ENCODE measurements at regions of chr6 and their contacts with region 1.

Region 1: DNA sequence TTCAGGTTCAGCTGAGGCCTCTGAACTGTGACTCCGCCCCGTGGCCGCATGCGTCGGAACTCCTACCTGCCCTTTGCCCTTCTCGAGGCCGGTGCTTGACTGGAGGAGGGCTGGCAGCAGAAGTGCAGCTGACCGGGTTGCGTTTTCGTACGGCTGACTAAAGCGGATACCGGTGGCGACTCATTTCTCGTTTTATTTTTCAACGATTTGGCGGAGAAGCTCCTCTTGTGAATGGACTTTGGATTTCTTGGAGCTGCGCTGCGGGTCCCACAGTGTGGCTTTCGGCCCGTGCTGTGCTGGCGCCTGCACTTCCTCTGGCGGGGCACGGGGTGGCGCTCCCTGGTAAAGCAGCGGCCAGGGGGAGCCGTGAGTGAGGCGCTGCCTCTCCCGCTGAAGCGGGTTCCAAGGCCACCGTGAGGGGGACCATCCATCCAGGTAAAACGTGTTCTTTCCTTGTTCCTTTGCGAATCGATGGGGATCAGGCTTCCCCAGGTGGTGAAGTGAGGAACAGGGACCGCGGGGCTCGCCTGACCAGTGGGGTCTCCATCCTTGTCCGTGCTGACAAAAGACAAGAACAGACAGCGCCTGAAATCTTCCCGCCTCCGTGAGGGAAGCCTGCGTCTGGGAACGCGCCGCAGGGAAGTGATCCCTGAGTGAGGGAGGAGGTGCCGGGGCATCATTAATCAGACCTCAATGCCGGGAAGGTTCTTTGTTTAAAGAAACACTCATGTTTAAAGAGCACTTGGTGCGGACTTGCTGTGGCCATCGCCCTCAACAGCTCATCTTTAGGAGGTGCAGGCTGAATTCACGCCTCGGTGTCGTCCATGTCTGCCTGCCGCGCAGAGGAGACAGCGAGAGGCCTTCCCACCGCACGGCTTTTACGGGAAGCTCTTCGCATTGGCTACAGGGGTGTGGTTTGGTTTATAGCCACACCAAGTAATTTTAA is 38.8 kb downstream of the ERMARD start:
- DNase-seq: peak; percentile 81
- ATAC-seq: peak; percentile 93
- H3K4me3 ChIP-seq: peak overlapping the region; percentile 32 to 73 (median 51)
- H3K4me3 Mint-ChIP-seq: peak overlapping the region; percentile 92
- H3K27ac ChIP-seq: no peak overlapping the region
- H3K27ac Mint-ChIP-seq: no peak overlapping the region
- H3K4me1 ChIP-seq: peaks cover 9 to 16% of the 10 kb centered on the region in 2 donors
- H3K4me1 Mint-ChIP-seq: peaks cover 14% of the 10 kb centered on the region
- H3K27me3 ChIP-seq: peaks cover 0 to 39% (median 8%) of the 10 kb centered on the region in 4 experiments
- H3K27me3 Mint-ChIP-seq: peaks cover 41% of the 10 kb centered on the region
- CTCF ChIP-seq: peak; percentile 99

Region 2: DNA sequence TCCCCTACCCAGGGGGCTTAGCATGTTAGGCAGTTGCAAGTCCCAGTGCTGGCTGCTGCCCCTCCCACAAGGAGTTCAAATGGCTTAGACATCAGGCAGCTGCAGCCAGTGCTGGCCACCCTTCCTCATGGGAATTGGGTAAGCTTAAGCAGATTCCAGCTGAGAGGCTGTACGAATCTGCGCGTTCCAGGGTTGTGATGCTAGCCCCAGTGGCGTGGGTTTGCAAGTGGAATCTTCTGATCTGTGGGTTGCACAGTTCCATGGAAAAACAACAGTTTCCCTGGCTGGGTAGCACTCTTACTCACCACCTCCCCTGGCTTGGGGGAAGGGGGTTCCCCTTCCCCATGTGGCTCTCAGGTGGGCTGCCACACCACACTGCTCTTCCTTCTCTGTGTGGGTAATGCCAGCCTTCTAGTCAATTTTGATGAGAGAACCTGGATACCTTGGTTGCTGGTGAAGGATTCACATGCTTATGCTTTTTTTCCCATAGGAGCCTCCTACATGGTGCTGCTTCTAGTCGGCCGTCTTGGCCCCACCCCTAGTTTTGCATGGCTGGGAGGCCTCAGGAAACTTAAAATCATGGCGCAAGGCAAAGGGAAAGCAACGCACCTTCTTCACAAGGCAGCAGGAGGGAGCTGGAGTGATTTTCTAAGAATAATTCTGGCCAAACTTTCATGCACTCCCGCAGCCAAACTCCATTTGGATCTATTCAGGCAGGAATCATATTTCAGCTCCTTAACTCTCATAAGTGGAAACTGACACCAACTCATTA is 51.9 kb before region 1 on chr6:
- CTCF ChIA-PET with region 1: no interaction called
- POLR2A ChIA-PET with region 1: no interaction called
- intact Hi-C with region 1: no loop called
- DNase-seq: no peak
- ATAC-seq: no peak
- H3K4me3 ChIP-seq: no peak overlapping the region
- H3K4me3 Mint-ChIP-seq: no peak overlapping the region
- H3K27ac ChIP-seq: no peak overlapping the region
- H3K27ac Mint-ChIP-seq: no peak overlapping the region
- H3K4me1 ChIP-seq: no peaks in the 10 kb centered on the region
- H3K4me1 Mint-ChIP-seq: no peaks in the 10 kb centered on the region
- H3K27me3 ChIP-seq: peaks cover 0 to 5% (median 3%) of the 10 kb centered on the region in 4 experiments
- H3K27me3 Mint-ChIP-seq: peaks cover 10% of the 10 kb centered on the region
- CTCF ChIP-seq: no peak

Region 3: DNA sequence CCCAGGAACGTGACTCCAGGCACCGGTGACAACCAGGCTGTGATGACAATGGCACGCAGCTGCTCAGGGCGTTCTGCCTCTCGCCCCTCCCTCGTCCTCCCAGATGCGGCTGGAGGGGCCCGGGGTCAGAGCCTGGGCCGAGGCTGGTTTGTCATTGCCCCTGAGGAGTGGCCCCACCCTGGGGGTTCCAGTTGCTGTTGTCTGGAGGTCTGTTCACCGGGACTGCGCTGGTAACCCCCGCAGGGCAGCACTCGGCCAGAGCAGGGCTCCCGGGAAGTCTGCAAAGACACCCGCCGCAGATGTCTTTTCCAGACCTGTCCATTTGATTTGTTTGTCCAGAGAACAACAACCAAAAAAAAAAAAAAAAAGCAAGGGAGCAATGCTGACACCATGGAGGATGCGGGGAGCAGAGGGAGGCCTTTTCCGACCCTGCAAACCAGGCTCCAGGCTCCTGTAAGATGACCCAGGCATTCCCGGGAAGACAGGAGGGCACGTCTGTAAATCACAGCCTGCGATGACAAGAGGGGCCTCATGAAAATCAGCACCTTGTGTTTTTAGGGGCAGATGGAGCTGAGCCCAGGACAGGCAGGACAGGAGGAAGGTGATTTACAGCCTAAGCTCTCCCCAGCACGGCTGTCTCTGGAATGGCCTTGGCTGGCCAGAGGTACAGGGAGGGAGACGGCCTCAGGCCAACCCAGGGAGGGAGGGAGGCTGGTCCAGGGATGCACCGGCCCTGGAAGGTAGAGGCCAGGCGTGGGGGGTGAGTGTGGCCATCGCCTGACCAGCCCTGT is 150.4 kb after region 1 on chr6:
- CTCF ChIA-PET with region 1: no interaction called
- POLR2A ChIA-PET with region 1: no interaction called
- intact Hi-C with region 1: loop called (anchors 10 kb)
- DNase-seq: no peak
- ATAC-seq: no peak
- H3K4me3 ChIP-seq: no peak overlapping the region
- H3K4me3 Mint-ChIP-seq: no peak overlapping the region
- H3K27ac ChIP-seq: no peak overlapping the region
- H3K27ac Mint-ChIP-seq: no peak overlapping the region
- H3K4me1 ChIP-seq: no peaks in the 10 kb centered on the region
- H3K4me1 Mint-ChIP-seq: no peaks in the 10 kb centered on the region
- H3K27me3 ChIP-seq: peaks cover 0 to 5% (median 2%) of the 10 kb centered on the region in 4 experiments
- H3K27me3 Mint-ChIP-seq: peaks cover 25% of the 10 kb centered on the region
- CTCF ChIP-seq: no peak

Measured in B cell (primary cell).